ENCODE measurements at regions of chr11 and their contacts with region 1.

Region 1: DNA sequence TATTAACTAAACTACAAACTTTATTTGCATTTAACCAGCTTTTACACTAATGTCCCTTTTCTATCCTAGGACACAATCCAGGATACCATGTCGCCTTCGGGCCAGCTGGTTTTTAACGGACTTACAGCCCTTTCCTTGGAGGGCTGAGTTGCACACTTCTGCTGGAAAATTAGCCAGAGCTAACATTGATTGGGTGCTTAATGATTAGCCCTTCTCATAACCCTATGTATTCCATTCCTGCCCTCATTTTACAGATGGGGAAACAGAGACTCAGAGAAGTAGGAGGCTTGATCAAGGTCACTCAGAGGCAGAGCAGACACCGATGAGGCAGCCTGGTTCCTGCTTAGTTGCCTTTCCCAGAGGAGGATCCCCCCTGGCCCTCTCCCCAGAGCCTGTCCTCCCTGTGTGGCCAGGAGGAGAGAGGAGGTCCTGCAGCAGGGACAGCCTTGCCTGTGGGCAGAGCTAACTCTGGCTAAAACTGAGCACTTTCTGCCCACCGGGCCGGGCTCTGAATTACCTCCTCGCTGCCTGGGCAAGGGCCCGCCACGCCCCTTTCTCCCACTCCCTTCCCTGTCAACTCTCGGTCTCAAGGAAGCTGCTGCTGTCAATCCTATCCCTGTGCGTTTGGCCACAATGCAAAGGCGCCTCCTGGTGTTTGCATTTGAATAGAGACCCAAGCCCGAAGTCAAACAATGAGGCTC is 59.6 kb upstream of the PAX6 start:
- DNase-seq: peak; percentile 37
- H3K4me3 ChIP-seq: no peak overlapping the region
- H3K27ac ChIP-seq: no peak overlapping the region
- H3K4me1 ChIP-seq: no peaks in the 10 kb centered on the region
- H3K27me3 ChIP-seq: peaks cover 3% of the 10 kb centered on the region
- CTCF ChIP-seq: peak; percentile 36

Region 2: GRCh38 chr11:31240338-31240904 is 630.3 kb before region 1 on chr11:
- intact Hi-C with region 1: loop called (anchors 10 kb)
- DNase-seq: no peak
- H3K4me3 ChIP-seq: no peak overlapping the region
- H3K27ac ChIP-seq: no peak overlapping the region
- H3K4me1 ChIP-seq: no peaks in the 10 kb centered on the region
- H3K27me3 ChIP-seq: no peaks in the 10 kb centered on the region
- CTCF ChIP-seq: peak; percentile 21

Region 3: GRCh38 chr11:31397239-31397834 is 473.4 kb before region 1 on chr11:
- intact Hi-C with region 1: loop called (anchors 5 kb)
- DNase-seq: no peak
- H3K4me3 ChIP-seq: no peak overlapping the region
- H3K27ac ChIP-seq: no peak overlapping the region
- H3K4me1 ChIP-seq: no peaks in the 10 kb centered on the region
- H3K27me3 ChIP-seq: no peaks in the 10 kb centered on the region
- CTCF ChIP-seq: peak; percentile 41

Region 4: DNA sequence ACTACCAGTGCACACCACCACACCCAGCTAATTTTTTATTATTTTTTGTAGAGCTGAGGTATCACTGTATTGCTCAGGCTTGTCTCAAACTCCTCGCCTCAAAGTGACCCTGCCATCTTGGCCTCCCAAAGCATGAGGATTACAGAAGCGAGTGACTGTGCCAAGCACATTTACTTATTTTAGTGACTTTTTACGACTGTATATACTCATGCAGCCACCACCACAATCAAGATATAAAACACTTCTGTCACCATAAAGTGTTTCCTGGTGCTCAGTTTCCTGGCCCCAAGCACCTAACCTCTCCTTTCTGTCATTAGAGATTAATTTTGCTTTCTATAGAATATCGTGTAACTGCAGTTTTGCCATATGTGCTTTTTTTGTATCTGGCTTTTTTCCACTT is 335.3 kb before region 1 on chr11:
- intact Hi-C with region 1: no loop called
- DNase-seq: no peak
- H3K4me3 ChIP-seq: no peak overlapping the region
- H3K27ac ChIP-seq: no peak overlapping the region
- H3K4me1 ChIP-seq: no peaks in the 10 kb centered on the region
- H3K27me3 ChIP-seq: no peaks in the 10 kb centered on the region
- CTCF ChIP-seq: no peak

Region 5: DNA sequence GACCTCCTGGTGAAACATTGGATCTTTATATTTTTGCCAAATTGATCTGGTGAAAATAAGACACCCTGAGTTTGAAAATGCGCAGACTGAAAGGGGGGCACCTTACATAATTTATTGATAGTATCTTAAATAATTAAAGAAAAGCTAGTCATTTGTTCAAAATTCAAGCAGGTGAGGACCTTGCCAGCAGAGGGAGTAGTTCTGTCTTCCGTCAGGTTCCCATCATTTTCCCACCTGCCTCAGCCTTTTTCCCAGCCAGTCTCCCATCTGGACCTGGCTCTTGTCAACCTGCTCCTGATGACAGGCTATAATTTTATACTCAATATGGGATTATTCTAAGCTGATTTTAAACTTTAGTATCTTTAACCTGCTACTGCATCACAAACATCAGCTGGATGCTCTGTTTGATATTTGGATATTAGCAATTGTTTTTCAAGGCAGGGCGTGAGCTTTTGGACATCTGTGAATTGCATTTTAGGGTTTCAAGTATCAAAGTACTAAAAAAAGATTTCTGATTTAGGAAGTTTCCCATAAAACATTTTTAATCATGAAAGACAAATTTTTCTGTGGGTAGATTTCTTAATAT is 229.2 kb before region 1 on chr11:
- intact Hi-C with region 1: loop called (anchors 5 kb)
- DNase-seq: peak; percentile 27
- H3K4me3 ChIP-seq: no peak overlapping the region
- H3K27ac ChIP-seq: no peak overlapping the region
- H3K4me1 ChIP-seq: no peaks in the 10 kb centered on the region
- H3K27me3 ChIP-seq: no peaks in the 10 kb centered on the region
- CTCF ChIP-seq: peak; percentile 36

Region 6: DNA sequence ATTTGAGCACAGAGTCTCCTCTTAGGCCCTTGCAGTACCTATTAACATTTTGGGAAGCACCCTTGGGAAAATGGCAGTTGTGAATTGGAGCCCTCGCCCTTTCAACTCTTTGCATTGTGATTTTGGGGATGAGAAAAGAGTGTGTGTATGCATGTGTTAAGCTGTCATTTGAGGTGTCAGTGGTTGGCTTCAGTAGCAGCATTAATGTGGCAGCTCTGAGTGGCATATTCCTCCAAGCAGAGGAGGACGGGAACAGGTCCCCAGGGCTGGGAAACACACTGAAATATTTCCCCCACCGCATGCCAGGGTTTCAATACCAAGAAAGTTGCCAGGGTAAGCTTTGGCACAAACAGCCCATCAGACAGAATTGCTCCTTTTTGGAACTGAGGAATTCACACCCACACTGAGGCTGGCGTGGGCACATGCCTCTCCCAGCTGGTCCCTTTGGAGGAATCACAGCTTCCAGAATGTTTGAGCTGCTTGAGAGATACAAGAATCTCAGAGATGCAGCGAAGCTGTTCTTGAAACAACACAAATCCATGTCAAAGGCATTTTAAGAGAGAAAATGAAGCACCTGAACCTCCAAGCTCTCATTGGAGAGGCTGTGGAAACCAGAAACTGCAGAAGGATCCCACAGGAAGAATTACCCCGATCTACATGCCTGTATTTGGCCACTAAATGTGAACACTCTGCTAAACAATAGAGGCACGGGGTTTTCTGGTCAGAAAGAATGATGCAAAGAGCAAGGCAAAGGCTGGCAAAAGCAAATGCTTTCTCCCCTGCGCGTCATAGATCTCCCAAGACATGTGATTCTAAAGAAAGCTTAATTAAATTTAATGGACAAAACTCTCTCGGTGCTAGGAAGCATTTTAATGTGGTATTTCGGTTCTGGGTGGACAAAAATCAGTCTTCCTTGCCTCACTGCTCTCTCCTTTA is 152.9 kb after region 1 on chr11:
- intact Hi-C with region 1: no loop called
- DNase-seq: no peak
- H3K4me3 ChIP-seq: no peak overlapping the region
- H3K27ac ChIP-seq: no peak overlapping the region
- H3K4me1 ChIP-seq: no peaks in the 10 kb centered on the region
- H3K27me3 ChIP-seq: no peaks in the 10 kb centered on the region
- CTCF ChIP-seq: no peak